ENCODE measurements at regions of chr13 and their contacts with region 1.

Region 1: GRCh38 chr13:20814224-20814910 is 40.6 kb upstream of the EEF1AKMT1 start:
- DNase-seq: no peak
- ATAC-seq: no peak
- H3K4me3 ChIP-seq: no peak overlapping the region
- H3K4me3 Mint-ChIP-seq: no peak overlapping the region
- H3K27ac ChIP-seq: no peak overlapping the region
- H3K27ac Mint-ChIP-seq: no peak overlapping the region
- H3K4me1 ChIP-seq: no peaks in the 10 kb centered on the region
- H3K4me1 Mint-ChIP-seq: peaks cover 2 to 6% (median 3%) of the 10 kb centered on the region in 3 donors
- H3K27me3 ChIP-seq: no peaks in the 10 kb centered on the region
- H3K27me3 Mint-ChIP-seq: no peaks in the 10 kb centered on the region

Region 2: GRCh38 chr13:20703780-20704445 is 110.5 kb before region 1 on chr13:
- CTCF ChIA-PET with region 1: no interaction called
- POLR2A ChIA-PET with region 1: interaction called in 1 of 2 experiments, 10 read pairs
- DNase-seq: peak; percentile 52 to 86 (median 73)
- ATAC-seq: peak; percentile 86 to 91 (median 88)
- H3K4me3 ChIP-seq: peak overlapping the region in 1 of 2 donors; percentile 65
- H3K4me3 Mint-ChIP-seq: peak overlapping the region in 2 of 3 donors; percentile 75 to 78
- H3K27ac ChIP-seq: no peak overlapping the region
- H3K27ac Mint-ChIP-seq: no peak overlapping the region
- H3K4me1 ChIP-seq: peaks cover 0 to 13% of the 10 kb centered on the region in 2 experiments
- H3K4me1 Mint-ChIP-seq: peaks cover 7 to 16% (median 13%) of the 10 kb centered on the region in 3 donors
- H3K27me3 ChIP-seq: peaks cover 0 to 20% of the 10 kb centered on the region in 2 experiments
- H3K27me3 Mint-ChIP-seq: peaks cover 16 to 19% of the 10 kb centered on the region in 2 donors

Region 3: DNA sequence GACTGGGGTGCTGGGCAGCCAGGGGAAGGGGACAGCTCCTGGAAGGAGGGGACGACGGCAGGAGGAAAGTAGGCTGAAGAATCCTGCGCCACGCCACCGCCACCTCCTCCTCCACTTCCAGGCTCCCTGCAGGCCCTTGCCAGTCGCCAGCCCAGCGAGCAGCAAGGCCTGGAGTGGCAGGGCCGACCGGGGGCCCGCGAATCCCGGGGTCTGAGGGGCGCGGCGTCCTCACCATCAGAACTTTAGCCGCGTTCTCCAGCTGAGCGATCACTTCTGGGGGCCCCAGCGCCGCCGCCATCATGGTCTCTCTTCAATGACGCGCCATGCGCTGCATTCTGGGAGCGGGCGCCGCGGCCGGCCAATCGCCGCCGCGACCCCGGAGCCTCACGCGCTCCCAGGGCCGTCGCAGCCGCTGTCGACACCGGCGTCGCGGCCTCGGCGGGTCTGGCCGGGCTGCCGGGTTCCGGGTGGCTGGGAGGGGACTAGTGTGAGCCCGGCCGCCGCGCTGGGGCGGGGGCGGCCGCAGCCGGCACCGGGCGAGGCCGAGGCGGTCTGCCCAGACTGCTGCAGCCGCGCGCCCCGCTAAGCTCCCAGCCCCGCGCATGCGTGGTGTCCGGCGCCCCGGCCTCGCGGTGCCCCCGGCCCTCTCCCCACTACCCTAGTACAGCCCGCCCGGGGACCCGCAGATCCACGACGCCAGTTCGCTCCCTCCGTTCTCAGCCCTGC is 88.2 kb after region 1 on chr13 and contains the start of gene XPO4:
- CTCF ChIA-PET with region 1: no interaction called
- POLR2A ChIA-PET with region 1: no interaction called
- DNase-seq: peak; percentile 57 to 85 (median 71)
- ATAC-seq: peak; percentile 96 to 98 (median 96)
- H3K4me3 ChIP-seq: peak within 1 kb of the TSS; percentile 79 to 91
- H3K4me3 Mint-ChIP-seq: peak within 1 kb of the TSS; percentile 94
- H3K27ac ChIP-seq: peak within 1 kb of the TSS; percentile 65
- H3K27ac Mint-ChIP-seq: peak within 1 kb of the TSS; percentile 92 to 95
- H3K4me1 ChIP-seq: peaks cover 7 to 21% of the 10 kb centered on the region in 2 experiments
- H3K4me1 Mint-ChIP-seq: peaks cover 38 to 41% (median 38%) of the 10 kb centered on the region in 3 donors
- H3K27me3 ChIP-seq: peaks cover 0 to 3% of the 10 kb centered on the region in 2 experiments
- H3K27me3 Mint-ChIP-seq: peaks cover 2% of the 10 kb centered on the region in 2 donors
- total RNA-seq, gene XPO4: 20.7 to 22.5 (median 22.0) TPM

Region 4: GRCh38 chr13:20953245-20953931 is 139.0 kb after region 1 on chr13:
- CTCF ChIA-PET with region 1: no interaction called
- POLR2A ChIA-PET with region 1: no interaction called
- DNase-seq: no peak
- ATAC-seq: no peak
- H3K4me3 ChIP-seq: no peak overlapping the region
- H3K4me3 Mint-ChIP-seq: no peak overlapping the region
- H3K27ac ChIP-seq: no peak overlapping the region
- H3K27ac Mint-ChIP-seq: no peak overlapping the region
- H3K4me1 ChIP-seq: no peaks in the 10 kb centered on the region
- H3K4me1 Mint-ChIP-seq: no peaks in the 10 kb centered on the region
- H3K27me3 ChIP-seq: peaks cover 0 to 36% of the 10 kb centered on the region in 2 experiments
- H3K27me3 Mint-ChIP-seq: peaks cover 19 to 42% of the 10 kb centered on the region in 2 donors